Activated naive CD4-positive, alpha-beta T cell treated with anti-CD3 and anti-CD28 coated beads for 36 hours (primary cell): ENCODE measurements at regions of chr5 and their contacts with region 1.

Region 1: DNA sequence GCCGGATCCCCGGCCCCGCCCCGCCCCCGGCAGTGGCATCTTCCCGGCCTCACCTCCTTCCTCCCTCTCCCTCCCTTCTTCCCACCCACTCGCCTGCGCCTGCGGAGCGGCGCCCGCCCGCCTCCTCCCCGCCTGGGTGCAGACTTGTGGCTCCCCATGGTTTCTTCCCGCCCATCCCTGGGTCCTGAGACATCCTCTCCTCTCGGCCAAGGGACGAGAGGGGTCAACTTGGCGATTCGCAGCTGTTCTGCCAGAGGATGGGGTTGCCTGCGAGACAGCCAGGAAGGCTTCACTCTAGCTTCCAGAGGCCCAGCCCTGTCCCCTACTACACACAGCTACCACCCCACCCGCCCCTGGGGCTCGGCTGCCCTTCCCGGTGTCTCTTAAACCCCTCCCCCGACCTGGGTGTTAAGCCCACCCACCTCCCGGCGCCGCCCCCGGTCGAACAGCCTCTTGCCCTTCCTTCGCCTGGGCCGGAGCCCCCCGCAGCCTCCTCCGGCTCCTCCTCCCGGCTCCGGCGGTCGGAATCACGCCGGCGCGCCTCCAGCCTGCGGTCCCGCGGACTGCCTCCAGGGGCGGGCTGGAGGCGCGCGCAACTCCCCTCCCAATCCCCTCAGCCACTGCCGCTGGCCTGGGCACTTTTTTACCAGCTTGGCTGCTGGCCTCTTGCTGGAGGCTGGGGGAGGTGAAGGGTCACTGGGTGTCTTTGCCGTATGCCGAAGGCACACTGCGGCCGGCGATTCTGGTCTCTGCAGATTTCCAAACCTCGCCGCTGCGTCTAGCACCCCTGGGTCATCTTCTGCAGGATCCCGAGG is 1.9 kb downstream of the JADE2 start:
- DNase-seq: peak; percentile 78
- H3K4me3 Mint-ChIP-seq: peak overlapping the region; percentile 88
- H3K27ac Mint-ChIP-seq: peak overlapping the region; percentile 95
- H3K4me1 Mint-ChIP-seq: peaks cover 46% of the 10 kb centered on the region
- H3K27me3 Mint-ChIP-seq: no peaks in the 10 kb centered on the region

Region 2: GRCh38 chr5:134176511-134177368 is 350.6 kb before region 1 on chr5 and contains the start of gene SKP1:
- CTCF ChIA-PET with region 1: no interaction called
- intact Hi-C with region 1: loop called (anchors 2 kb)
- DNase-seq: peak; percentile 83
- H3K4me3 Mint-ChIP-seq: peak within 1 kb of the TSS; percentile 96
- H3K27ac Mint-ChIP-seq: peak within 1 kb of the TSS; percentile 94
- H3K4me1 Mint-ChIP-seq: peaks cover 31% of the 10 kb centered on the region
- H3K27me3 Mint-ChIP-seq: no peaks in the 10 kb centered on the region
- total RNA-seq, gene SKP1: 307 to 309 TPM

Region 3: GRCh38 chr5:134436523-134437339 is 90.6 kb before region 1 on chr5:
- CTCF ChIA-PET with region 1: no interaction called
- intact Hi-C with region 1: loop called (anchors 1 kb)
- DNase-seq: peak; percentile 80
- H3K4me3 Mint-ChIP-seq: peak overlapping the region; percentile 25
- H3K27ac Mint-ChIP-seq: no peak overlapping the region
- H3K4me1 Mint-ChIP-seq: peaks cover 32% of the 10 kb centered on the region
- H3K27me3 Mint-ChIP-seq: no peaks in the 10 kb centered on the region

Region 4: GRCh38 chr5:134511788-134512650 is 15.3 kb before region 1 on chr5:
- CTCF ChIA-PET with region 1: interaction called, 6 read pairs
- intact Hi-C with region 1: loop called (anchors 1 kb)
- DNase-seq: peak; percentile 30
- H3K4me3 Mint-ChIP-seq: no peak overlapping the region
- H3K27ac Mint-ChIP-seq: peak overlapping the region; percentile 60
- H3K4me1 Mint-ChIP-seq: peaks cover 25% of the 10 kb centered on the region
- H3K27me3 Mint-ChIP-seq: no peaks in the 10 kb centered on the region

Region 5: GRCh38 chr5:134577796-134578363 is 50.5 kb after region 1 on chr5:
- CTCF ChIA-PET with region 1: interaction called, 5 read pairs
- intact Hi-C with region 1: loop called (anchors 1 kb)
- DNase-seq: peak; percentile 91
- H3K4me3 Mint-ChIP-seq: no peak overlapping the region
- H3K27ac Mint-ChIP-seq: peak overlapping the region; percentile 69
- H3K4me1 Mint-ChIP-seq: peaks cover 15% of the 10 kb centered on the region
- H3K27me3 Mint-ChIP-seq: no peaks in the 10 kb centered on the region

Region 6: GRCh38 chr5:134904630-134905245 is 377.4 kb after region 1 on chr5 and contains the start of gene PCBD2:
- CTCF ChIA-PET with region 1: no interaction called
- intact Hi-C with region 1: loop called (anchors 2 kb)
- DNase-seq: peak; percentile 95
- H3K4me3 Mint-ChIP-seq: peak within 1 kb of the TSS; percentile 98
- H3K27ac Mint-ChIP-seq: peak within 1 kb of the TSS; percentile 99
- H3K4me1 Mint-ChIP-seq: peaks cover 17% of the 10 kb centered on the region
- H3K27me3 Mint-ChIP-seq: no peaks in the 10 kb centered on the region
- total RNA-seq, gene PCBD2: 9.6 to 10.5 TPM

Region 7: GRCh38 chr5:134982230-134982629 is 454.9 kb after region 1 on chr5:
- CTCF ChIA-PET with region 1: no interaction called
- intact Hi-C with region 1: no loop called
- DNase-seq: no peak
- H3K4me3 Mint-ChIP-seq: no peak overlapping the region
- H3K27ac Mint-ChIP-seq: no peak overlapping the region
- H3K4me1 Mint-ChIP-seq: no peaks in the 10 kb centered on the region
- H3K27me3 Mint-ChIP-seq: no peaks in the 10 kb centered on the region